ENCODE measurements at regions of chr3 and their contacts with region 1.

Region 1: DNA sequence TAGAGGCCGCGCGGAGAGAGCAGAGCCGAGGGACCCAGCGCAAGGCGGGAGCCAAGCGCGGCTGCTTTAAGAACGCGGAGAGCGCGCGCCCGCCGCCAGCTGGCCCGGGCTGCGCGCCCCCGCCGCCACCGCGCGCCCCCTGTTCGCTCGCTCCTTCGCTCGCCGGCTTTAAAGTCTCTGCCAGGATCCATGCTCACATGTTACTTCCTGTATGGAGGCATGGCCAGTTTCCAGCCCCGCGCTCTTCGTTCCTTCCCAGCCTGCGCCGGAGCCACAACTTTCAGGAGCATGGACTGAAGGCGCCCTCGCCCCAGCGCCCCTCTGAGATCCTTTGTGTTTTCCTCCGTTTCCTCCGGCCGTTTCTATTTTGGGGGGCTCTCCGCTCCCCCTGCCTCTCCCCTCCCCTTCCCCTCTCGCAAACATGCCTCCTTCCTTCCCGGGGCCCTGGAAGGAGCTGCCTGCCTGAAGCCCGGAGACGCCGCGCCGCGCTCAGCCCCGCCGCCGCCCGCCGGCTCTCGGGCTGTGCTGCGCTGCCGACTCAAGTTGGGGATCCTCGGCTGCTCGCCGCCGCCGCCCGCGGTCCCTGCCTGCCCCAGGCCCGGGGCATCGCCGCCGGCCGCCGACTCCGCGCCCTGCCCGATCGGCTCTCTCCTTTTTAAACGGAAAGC is at the start of gene PTPRG:
- DNase-seq: peak; percentile 90
- H3K4me3 ChIP-seq: peak within 1 kb of the TSS; percentile 73 to 75
- H3K27ac ChIP-seq: peak within 1 kb of the TSS; percentile 71 to 92
- H3K4me1 ChIP-seq: no peaks in the 10 kb centered on the region
- H3K27me3 ChIP-seq: no peaks in the 10 kb centered on the region
- CTCF ChIP-seq: peak in 1 of 4 experiments; percentile 11
- POLR2A ChIP-seq: peak; percentile 58
- total RNA-seq, gene PTPRG: 22.0 to 78.6 TPM

Region 2: DNA sequence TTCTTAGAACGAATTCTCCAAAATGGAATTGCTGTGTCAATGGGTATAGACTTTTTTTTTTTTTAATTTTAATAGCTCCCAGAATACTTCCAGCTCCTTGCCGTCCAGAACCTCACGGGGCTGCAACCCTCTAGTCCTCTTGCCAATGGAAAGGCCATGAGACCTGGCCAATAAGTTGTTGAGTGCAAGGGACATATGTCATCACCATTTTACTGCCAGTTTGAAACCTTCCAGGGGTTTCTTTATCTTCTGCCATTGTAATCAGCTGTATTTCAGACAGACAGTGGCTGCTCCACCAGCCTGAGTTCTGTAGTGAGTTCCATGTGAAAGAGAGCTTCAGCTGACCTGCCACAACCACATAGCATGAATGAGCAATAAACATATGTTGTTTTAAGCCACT is 95.2 kb before region 1 on chr3:
- intact Hi-C with region 1: no loop called
- DNase-seq: no peak
- H3K4me3 ChIP-seq: no peak overlapping the region
- H3K27ac ChIP-seq: no peak overlapping the region
- H3K4me1 ChIP-seq: no peaks in the 10 kb centered on the region
- H3K27me3 ChIP-seq: no peaks in the 10 kb centered on the region
- CTCF ChIP-seq: no peak
- POLR2A ChIP-seq: no peak

Region 3: GRCh38 chr3:61864886-61865285 is 303.4 kb after region 1 on chr3:
- intact Hi-C with region 1: loop called (anchors 5 kb)
- DNase-seq: no peak
- H3K4me3 ChIP-seq: no peak overlapping the region
- H3K27ac ChIP-seq: no peak overlapping the region
- H3K4me1 ChIP-seq: no peaks in the 10 kb centered on the region
- H3K27me3 ChIP-seq: no peaks in the 10 kb centered on the region
- CTCF ChIP-seq: no peak
- POLR2A ChIP-seq: no peak

Region 4: GRCh38 chr3:61927332-61927731 is 365.8 kb after region 1 on chr3:
- intact Hi-C with region 1: loop called (anchors 5 kb)
- DNase-seq: no peak
- H3K4me3 ChIP-seq: no peak overlapping the region
- H3K27ac ChIP-seq: no peak overlapping the region
- H3K4me1 ChIP-seq: no peaks in the 10 kb centered on the region
- H3K27me3 ChIP-seq: no peaks in the 10 kb centered on the region
- CTCF ChIP-seq: no peak
- POLR2A ChIP-seq: no peak

Region 5: GRCh38 chr3:62097121-62097520 is 535.6 kb after region 1 on chr3:
- intact Hi-C with region 1: loop called (anchors 5 kb)
- DNase-seq: peak; percentile 48
- H3K4me3 ChIP-seq: no peak overlapping the region
- H3K27ac ChIP-seq: peak overlapping the region; percentile 31 to 48
- H3K4me1 ChIP-seq: no peaks in the 10 kb centered on the region
- H3K27me3 ChIP-seq: no peaks in the 10 kb centered on the region
- CTCF ChIP-seq: no peak
- POLR2A ChIP-seq: no peak

Region 6: GRCh38 chr3:62188681-62189383 is 627.3 kb after region 1 on chr3:
- intact Hi-C with region 1: loop called (anchors 2 kb)
- DNase-seq: peak; percentile 75
- H3K4me3 ChIP-seq: no peak overlapping the region
- H3K27ac ChIP-seq: no peak overlapping the region
- H3K4me1 ChIP-seq: no peaks in the 10 kb centered on the region
- H3K27me3 ChIP-seq: no peaks in the 10 kb centered on the region
- CTCF ChIP-seq: peak; percentile 51 to 78 (median 76)
- POLR2A ChIP-seq: no peak